Caco-2 (cell line): ENCODE measurements at regions of chr16 and their contacts with region 1.

Region 1: GRCh38 chr16:49592546-49593423 is 219.2 kb downstream of the C16orf78 start:
- DNase-seq: peak in 1 of 2 experiments; percentile 51
- H3K4me3 ChIP-seq: no peak overlapping the region
- H3K4me3 Mint-ChIP-seq: no peak overlapping the region
- H3K27ac Mint-ChIP-seq: no peak overlapping the region
- H3K4me1 ChIP-seq: no peaks in the 10 kb centered on the region
- H3K4me1 Mint-ChIP-seq: no peaks in the 10 kb centered on the region
- H3K27me3 ChIP-seq: no peaks in the 10 kb centered on the region; the same call in 1 of the 2 replicates
- H3K27me3 Mint-ChIP-seq: peaks cover 38% of the 10 kb centered on the region
- CTCF ChIP-seq: peak; percentile 89 to 93

Region 2: GRCh38 chr16:49407873-49408550 is 184.8 kb before region 1 on chr16:
- CTCF ChIA-PET with region 1: interaction called, 11 read pairs
- POLR2A ChIA-PET with region 1: no interaction called
- intact Hi-C with region 1: loop called (anchors 1 kb)
- DNase-seq: peak; percentile 87 to 89
- H3K4me3 ChIP-seq: no peak overlapping the region
- H3K4me3 Mint-ChIP-seq: no peak overlapping the region
- H3K27ac Mint-ChIP-seq: no peak overlapping the region
- H3K4me1 ChIP-seq: no peaks in the 10 kb centered on the region
- H3K4me1 Mint-ChIP-seq: no peaks in the 10 kb centered on the region
- H3K27me3 ChIP-seq: no peaks in the 10 kb centered on the region
- H3K27me3 Mint-ChIP-seq: peaks cover 9% of the 10 kb centered on the region
- CTCF ChIP-seq: peak; percentile 92 to 97

Region 3: GRCh38 chr16:49491771-49492761 is 100.7 kb before region 1 on chr16:
- CTCF ChIA-PET with region 1: no interaction called
- POLR2A ChIA-PET with region 1: no interaction called
- intact Hi-C with region 1: loop called (anchors 5 kb)
- DNase-seq: peak in 1 of 2 experiments; percentile 61
- H3K4me3 ChIP-seq: no peak overlapping the region
- H3K4me3 Mint-ChIP-seq: no peak overlapping the region
- H3K27ac Mint-ChIP-seq: no peak overlapping the region
- H3K4me1 ChIP-seq: no peaks in the 10 kb centered on the region; the same call in 1 of the 2 replicates
- H3K4me1 Mint-ChIP-seq: no peaks in the 10 kb centered on the region
- H3K27me3 ChIP-seq: peaks cover 3% of the 10 kb centered on the region; the same call in 1 of the 2 replicates
- H3K27me3 Mint-ChIP-seq: peaks cover 16% of the 10 kb centered on the region
- CTCF ChIP-seq: peak; percentile 90

Region 4: DNA sequence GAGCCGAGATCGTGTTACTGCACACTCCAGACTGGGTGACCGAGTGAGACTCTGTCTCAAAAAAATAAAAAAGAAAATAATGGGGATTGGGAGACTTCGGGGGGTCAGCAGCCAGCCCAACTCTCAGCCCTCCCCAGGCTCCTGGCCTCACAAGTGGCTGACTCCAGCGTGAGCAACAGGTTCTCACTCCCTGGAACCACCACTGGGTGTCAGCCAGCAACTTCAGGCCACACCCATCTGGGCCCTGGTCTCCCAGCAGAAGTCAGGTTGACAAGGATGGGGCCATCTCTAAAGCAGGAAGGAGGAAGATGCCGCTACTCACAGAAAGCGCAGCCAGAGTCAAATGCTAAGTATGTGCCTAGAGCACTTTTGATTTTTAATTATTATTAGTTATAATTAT is 79.7 kb before region 1 on chr16:
- CTCF ChIA-PET with region 1: no interaction called
- POLR2A ChIA-PET with region 1: no interaction called
- intact Hi-C with region 1: loop called (anchors 5 kb)
- DNase-seq: peak in 1 of 2 experiments; percentile 31
- H3K4me3 ChIP-seq: no peak overlapping the region
- H3K4me3 Mint-ChIP-seq: no peak overlapping the region
- H3K27ac Mint-ChIP-seq: no peak overlapping the region
- H3K4me1 ChIP-seq: no peaks in the 10 kb centered on the region
- H3K4me1 Mint-ChIP-seq: no peaks in the 10 kb centered on the region
- H3K27me3 ChIP-seq: no peaks in the 10 kb centered on the region
- H3K27me3 Mint-ChIP-seq: peaks cover 18% of the 10 kb centered on the region
- CTCF ChIP-seq: peak in 1 of 2 experiments; percentile 41

Region 5: GRCh38 chr16:49556606-49557446 is 36.0 kb before region 1 on chr16:
- CTCF ChIA-PET with region 1: interaction called, 7 read pairs
- POLR2A ChIA-PET with region 1: no interaction called
- intact Hi-C with region 1: loop called (anchors 1 kb)
- DNase-seq: peak in 1 of 2 experiments; percentile 30
- H3K4me3 ChIP-seq: 0 out of 2 replicates have a peak overlapping the region, but pooled peaks have one; percentile 1
- H3K4me3 Mint-ChIP-seq: peak overlapping the region; percentile 33
- H3K27ac Mint-ChIP-seq: no peak overlapping the region
- H3K4me1 ChIP-seq: peaks cover 6% of the 10 kb centered on the region; the same call in 1 of the 2 replicates
- H3K4me1 Mint-ChIP-seq: no peaks in the 10 kb centered on the region
- H3K27me3 ChIP-seq: no peaks in the 10 kb centered on the region; the same call in none of the 2 replicates
- H3K27me3 Mint-ChIP-seq: peaks cover 11% of the 10 kb centered on the region
- CTCF ChIP-seq: peak; percentile 67 to 73

Region 6: GRCh38 chr16:49639739-49640431 is 47.1 kb after region 1 on chr16:
- CTCF ChIA-PET with region 1: no interaction called
- POLR2A ChIA-PET with region 1: no interaction called
- intact Hi-C with region 1: no loop called
- DNase-seq: no peak
- H3K4me3 ChIP-seq: no peak overlapping the region
- H3K4me3 Mint-ChIP-seq: no peak overlapping the region
- H3K27ac Mint-ChIP-seq: no peak overlapping the region
- H3K4me1 ChIP-seq: no peaks in the 10 kb centered on the region
- H3K4me1 Mint-ChIP-seq: no peaks in the 10 kb centered on the region
- H3K27me3 ChIP-seq: peaks cover 4% of the 10 kb centered on the region
- H3K27me3 Mint-ChIP-seq: peaks cover 15% of the 10 kb centered on the region
- CTCF ChIP-seq: no peak

Region 7: DNA sequence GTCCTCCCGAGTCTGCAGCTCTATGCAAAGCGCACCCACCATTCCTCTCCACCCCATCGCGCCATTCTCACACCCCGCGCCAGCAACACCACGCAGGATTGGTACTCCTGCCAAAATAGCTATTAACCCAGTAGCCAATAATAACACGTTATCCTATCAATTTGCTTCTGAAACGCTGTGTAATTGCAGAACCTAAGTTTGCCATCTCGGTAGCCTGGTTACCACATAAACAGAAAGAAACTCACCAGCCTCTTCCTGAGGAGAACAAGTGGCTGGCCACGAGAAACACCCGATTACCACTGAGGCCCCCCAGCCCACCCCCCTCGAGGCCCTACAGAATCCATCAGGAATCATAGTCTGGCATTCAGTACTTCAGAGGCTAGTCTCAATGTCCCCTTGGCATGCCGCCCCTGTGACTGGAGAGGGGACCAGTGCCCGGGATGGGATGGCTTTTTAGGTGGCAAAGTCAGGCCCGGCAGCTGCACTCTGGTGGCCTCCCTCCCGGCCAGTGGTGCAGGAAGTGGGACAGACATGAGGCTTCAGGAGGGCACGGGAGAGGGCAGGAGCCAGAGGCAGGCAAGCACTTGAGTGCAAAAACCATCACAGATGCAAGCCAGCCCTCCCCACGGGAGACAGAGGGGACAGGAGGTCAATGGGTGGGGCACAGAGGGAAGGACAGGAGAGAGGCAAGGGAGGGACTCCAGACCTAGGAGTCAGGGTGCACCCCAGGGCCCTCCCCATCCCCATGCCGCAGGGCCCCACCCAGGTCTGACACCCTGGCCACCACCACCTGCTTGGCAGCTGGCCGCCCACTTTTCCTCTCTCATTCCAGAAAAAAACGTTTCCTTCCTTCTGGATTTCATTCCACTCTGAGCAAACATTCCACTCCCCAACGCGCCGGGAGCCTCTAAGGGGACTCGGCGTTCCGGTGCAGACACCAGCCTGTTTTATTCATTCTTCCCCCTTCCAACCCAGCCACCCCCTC is 70.6 kb after region 1 on chr16:
- CTCF ChIA-PET with region 1: no interaction called
- POLR2A ChIA-PET with region 1: no interaction called
- intact Hi-C with region 1: no loop called
- DNase-seq: no peak
- H3K4me3 ChIP-seq: no peak overlapping the region
- H3K4me3 Mint-ChIP-seq: no peak overlapping the region
- H3K27ac Mint-ChIP-seq: no peak overlapping the region
- H3K4me1 ChIP-seq: no peaks in the 10 kb centered on the region
- H3K4me1 Mint-ChIP-seq: no peaks in the 10 kb centered on the region
- H3K27me3 ChIP-seq: no peaks in the 10 kb centered on the region; the same call in 1 of the 2 replicates
- H3K27me3 Mint-ChIP-seq: peaks cover 6% of the 10 kb centered on the region
- CTCF ChIP-seq: no peak